Caco-2 (cell line): ENCODE measurements at regions of chr16 and their contacts with region 1.

Region 1: GRCh38 chr16:23435500-23435899 is 17.5 kb downstream of the COG7 start:
- DNase-seq: peak; percentile 51 to 70
- H3K4me3 ChIP-seq: no peak overlapping the region
- H3K4me3 Mint-ChIP-seq: no peak overlapping the region
- H3K27ac Mint-ChIP-seq: no peak overlapping the region
- H3K4me1 ChIP-seq: no peaks in the 10 kb centered on the region
- H3K4me1 Mint-ChIP-seq: no peaks in the 10 kb centered on the region
- H3K27me3 ChIP-seq: no peaks in the 10 kb centered on the region
- H3K27me3 Mint-ChIP-seq: no peaks in the 10 kb centered on the region
- CTCF ChIP-seq: peak; percentile 64 to 91

Region 2: DNA sequence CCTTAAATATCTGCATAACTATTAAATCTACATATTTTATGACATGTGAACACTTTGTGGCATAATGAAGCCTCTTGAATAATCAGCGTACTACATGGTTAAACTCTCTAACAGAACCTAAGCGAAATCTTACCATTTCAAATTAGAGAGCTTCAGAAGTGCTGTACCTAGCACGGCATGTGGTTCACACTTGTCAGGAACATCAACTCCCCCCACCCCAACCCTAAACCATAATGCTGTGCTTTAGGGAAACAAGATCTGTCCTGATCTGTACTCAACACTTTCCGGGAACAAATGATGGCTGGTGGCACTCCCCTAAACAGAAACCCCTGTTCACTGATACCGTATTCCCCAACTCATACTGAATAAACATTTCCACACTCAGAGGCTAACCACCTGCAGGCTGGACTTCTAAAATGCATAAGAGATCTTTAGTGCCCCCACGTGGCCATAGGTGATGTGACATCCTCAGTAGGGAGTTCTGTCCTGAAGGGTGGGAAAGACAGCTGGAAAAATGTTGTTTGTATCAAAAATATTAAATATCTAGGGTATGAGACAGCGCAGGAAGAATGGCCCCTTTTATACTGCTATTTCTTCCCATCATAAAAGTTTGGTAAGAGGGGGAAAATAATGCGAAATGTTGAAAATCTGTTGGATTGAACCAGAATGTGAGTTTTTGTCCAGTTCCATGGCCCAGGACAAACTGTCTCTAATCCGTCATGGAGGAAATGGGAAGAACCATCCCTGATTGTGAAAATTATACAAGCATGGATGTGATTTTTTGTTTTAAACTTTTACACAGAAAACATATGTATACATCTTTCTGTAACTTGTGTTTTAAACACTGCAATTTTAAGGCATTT is 374.8 kb before region 1 on chr16:
- CTCF ChIA-PET with region 1: no interaction called
- POLR2A ChIA-PET with region 1: no interaction called
- intact Hi-C with region 1: loop called (anchors 10 kb)
- DNase-seq: peak; percentile 64 to 72
- H3K4me3 ChIP-seq: no peak overlapping the region
- H3K4me3 Mint-ChIP-seq: no peak overlapping the region
- H3K27ac Mint-ChIP-seq: no peak overlapping the region
- H3K4me1 ChIP-seq: no peaks in the 10 kb centered on the region
- H3K4me1 Mint-ChIP-seq: peaks cover 6% of the 10 kb centered on the region
- H3K27me3 ChIP-seq: no peaks in the 10 kb centered on the region
- H3K27me3 Mint-ChIP-seq: peaks cover 15% of the 10 kb centered on the region
- CTCF ChIP-seq: peak; percentile 68 to 80

Region 3: DNA sequence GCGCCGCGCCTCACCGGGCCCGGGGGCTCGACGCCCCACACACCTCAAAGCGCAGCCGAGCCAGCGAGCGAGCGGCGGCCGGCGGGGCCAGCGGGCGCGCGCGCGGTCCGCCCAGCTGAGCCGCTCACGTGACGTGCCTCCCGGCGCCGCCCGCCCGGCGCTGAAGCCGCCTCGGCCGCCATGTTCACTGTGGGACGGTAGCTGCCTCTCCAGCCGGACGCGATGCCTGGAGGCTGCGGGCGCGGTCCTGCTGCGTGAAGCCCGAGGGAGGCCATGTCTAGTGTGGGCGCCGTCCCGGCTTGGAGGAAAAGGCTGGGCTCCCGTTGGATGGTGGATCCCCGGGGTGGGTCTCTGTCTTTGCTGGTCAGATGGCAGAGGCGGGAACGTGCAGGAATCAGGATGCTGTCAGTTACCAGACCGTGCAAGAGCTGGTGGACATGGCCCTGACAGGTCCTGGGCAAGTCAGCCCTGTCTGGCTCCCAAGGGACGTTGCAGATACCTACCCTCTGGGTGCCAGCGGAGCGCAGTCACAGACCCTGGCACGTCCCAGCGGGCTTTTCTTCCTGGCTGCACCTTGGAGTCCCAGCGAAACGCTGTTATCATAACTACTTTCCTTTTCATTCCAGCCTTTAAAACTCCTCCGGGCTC is 286.0 kb before region 1 on chr16 and contains the start of gene USP31:
- CTCF ChIA-PET with region 1: no interaction called
- POLR2A ChIA-PET with region 1: no interaction called
- intact Hi-C with region 1: loop called (anchors 1 kb)
- DNase-seq: peak; percentile 94 to 95
- H3K4me3 ChIP-seq: peak within 1 kb of the TSS; percentile 67
- H3K4me3 Mint-ChIP-seq: peak within 1 kb of the TSS; percentile 92
- H3K27ac Mint-ChIP-seq: peak within 1 kb of the TSS; percentile 79
- H3K4me1 ChIP-seq: peaks cover 8% of the 10 kb centered on the region
- H3K4me1 Mint-ChIP-seq: no peaks in the 10 kb centered on the region
- H3K27me3 ChIP-seq: no peaks in the 10 kb centered on the region
- H3K27me3 Mint-ChIP-seq: no peaks in the 10 kb centered on the region
- CTCF ChIP-seq: no peak
- total RNA-seq, gene USP31: 11.3 and 11.9 TPM in 2 replicates

Region 4: DNA sequence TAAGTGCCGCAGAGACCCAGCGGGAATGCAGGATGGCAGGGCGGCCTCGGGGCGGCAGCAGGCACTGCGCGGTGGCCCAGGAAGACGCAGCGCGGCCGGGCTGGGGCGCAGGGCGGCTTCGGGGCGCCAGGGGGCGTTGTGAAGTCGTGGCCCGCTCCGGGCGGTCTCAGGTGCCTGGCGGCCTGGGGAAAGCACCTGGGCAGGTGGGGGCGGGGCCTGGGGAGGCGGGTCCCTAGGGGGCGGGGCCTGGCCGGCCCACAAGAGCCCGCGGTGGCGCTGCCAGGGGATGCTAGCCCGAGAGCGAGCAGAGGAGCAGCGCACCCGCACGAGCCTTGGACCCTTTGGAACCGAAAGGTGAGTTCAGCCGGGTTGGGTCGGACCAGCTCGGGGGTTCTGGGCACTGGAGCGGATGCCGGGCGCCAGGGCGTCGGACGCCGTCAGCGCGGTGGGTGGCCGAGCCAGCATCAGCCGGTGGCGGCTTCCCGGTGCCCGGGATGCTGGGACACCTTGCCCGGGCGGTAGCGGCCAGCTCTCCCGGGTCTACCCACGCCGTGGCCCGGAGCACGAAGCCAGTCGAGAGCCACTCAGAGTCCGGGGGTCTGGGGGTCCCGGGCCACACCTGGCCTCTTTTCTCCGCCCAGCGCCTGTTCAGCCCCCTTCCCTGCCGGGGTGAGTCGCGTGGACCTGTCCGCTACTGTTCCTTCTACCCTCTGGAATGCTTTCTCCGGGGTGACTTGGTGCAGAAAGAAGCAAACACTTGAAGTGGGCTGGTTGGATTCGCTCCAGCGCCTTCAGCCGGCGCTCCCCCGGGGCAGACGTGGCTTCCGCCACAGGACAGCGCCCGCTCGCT is 252.8 kb before region 1 on chr16 and contains the start of gene SCNN1G:
- CTCF ChIA-PET with region 1: interaction called, 13 read pairs
- POLR2A ChIA-PET with region 1: no interaction called
- intact Hi-C with region 1: loop called (anchors 1 kb)
- DNase-seq: peak; percentile 85 to 95
- H3K4me3 ChIP-seq: peak within 1 kb of the TSS; percentile 31
- H3K4me3 Mint-ChIP-seq: peak within 1 kb of the TSS; percentile 66
- H3K27ac Mint-ChIP-seq: no peak within 1 kb of the TSS
- H3K4me1 ChIP-seq: peaks cover 6% of the 10 kb centered on the region; the same call in 1 of the 2 replicates
- H3K4me1 Mint-ChIP-seq: peaks cover 14% of the 10 kb centered on the region
- H3K27me3 ChIP-seq: peaks cover 5% of the 10 kb centered on the region; the same call in 1 of the 2 replicates
- H3K27me3 Mint-ChIP-seq: peaks cover 26% of the 10 kb centered on the region
- CTCF ChIP-seq: peak; percentile 78 to 90
- total RNA-seq, gene SCNN1G: not detected in 2 replicates

Region 5: DNA sequence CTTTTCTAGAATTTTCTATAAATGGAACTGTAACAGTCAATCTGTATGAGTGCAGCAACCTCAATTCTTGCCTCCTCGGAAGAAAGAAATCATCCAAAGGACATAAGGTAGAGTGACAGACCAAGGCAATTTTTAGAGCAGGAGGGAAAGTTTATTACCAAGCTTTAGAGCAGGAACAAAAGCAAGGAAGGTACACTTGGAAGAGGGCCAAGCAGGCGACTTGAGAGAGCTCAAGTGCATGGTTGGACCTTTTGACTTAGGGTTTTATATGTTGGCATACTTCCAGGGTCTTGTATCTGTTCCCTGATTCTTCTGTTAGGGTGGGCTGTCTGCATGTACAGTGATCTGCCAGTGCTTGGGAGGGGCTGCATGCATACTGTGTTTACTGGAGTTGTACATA is 202.7 kb before region 1 on chr16:
- CTCF ChIA-PET with region 1: no interaction called
- POLR2A ChIA-PET with region 1: no interaction called
- intact Hi-C with region 1: no loop called
- DNase-seq: no peak
- H3K4me3 ChIP-seq: no peak overlapping the region
- H3K4me3 Mint-ChIP-seq: no peak overlapping the region
- H3K27ac Mint-ChIP-seq: no peak overlapping the region
- H3K4me1 ChIP-seq: no peaks in the 10 kb centered on the region
- H3K4me1 Mint-ChIP-seq: no peaks in the 10 kb centered on the region
- H3K27me3 ChIP-seq: no peaks in the 10 kb centered on the region
- H3K27me3 Mint-ChIP-seq: peaks cover 19% of the 10 kb centered on the region
- CTCF ChIP-seq: no peak

Region 6: DNA sequence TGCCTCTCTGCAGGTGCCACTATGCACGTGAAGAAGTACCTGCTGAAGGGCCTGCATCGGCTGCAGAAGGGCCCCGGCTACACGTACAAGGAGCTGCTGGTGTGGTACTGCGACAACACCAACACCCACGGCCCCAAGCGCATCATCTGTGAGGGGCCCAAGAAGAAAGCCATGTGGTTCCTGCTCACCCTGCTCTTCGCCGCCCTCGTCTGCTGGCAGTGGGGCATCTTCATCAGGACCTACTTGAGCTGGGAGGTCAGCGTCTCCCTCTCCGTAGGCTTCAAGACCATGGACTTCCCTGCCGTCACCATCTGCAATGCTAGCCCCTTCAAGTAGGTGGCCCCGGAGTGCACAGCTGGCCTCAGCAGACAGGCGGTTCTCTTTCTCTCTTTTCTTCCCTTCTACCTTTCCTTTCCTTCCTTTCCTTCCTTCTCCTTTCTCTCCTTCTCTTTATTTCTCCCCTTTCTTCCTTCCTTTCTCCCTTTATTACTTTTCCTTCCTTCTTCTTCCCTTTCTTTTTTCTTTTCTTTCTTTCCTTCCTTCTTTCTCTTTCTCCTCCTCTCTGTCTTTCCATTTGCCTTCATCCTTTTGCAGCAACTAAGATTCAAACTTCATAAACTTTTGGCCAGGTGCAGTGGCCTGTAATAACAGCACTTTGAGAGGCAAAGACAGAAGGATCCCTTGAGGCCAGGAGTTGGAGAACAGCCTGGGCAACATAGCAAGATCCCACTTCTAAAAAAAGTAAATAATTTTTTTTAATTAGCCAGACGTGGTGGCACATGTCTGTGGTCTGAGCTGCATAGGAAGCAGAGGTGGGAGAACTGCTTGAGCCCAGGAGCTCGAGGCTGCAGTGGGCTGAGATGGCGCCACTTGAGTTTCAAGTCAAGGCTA is 86.7 kb before region 1 on chr16:
- CTCF ChIA-PET with region 1: no interaction called
- POLR2A ChIA-PET with region 1: no interaction called
- intact Hi-C with region 1: loop called (anchors 10 kb)
- DNase-seq: peak in 1 of 2 experiments; percentile 17
- H3K4me3 ChIP-seq: no peak overlapping the region
- H3K4me3 Mint-ChIP-seq: no peak overlapping the region
- H3K27ac Mint-ChIP-seq: no peak overlapping the region
- H3K4me1 ChIP-seq: no peaks in the 10 kb centered on the region
- H3K4me1 Mint-ChIP-seq: no peaks in the 10 kb centered on the region
- H3K27me3 ChIP-seq: no peaks in the 10 kb centered on the region
- H3K27me3 Mint-ChIP-seq: peaks cover 3% of the 10 kb centered on the region
- CTCF ChIP-seq: peak in 1 of 2 experiments; percentile 33